Naive thymus-derived CD4-positive, alpha-beta T cell (primary cell): ENCODE measurements at regions of chr2 and their contacts with region 1.

Region 1: GRCh38 chr2:198127627-198128026 is 323.2 kb downstream of the PLCL1 start:
- DNase-seq: peak in 8 of 9 donors; percentile 24 to 66 (median 48)
- ATAC-seq: peak; percentile 81
- H3K4me3 ChIP-seq: no peak overlapping the region
- H3K4me3 Mint-ChIP-seq: no peak overlapping the region
- H3K27ac ChIP-seq: no peak overlapping the region
- H3K27ac Mint-ChIP-seq: peak overlapping the region in 1 of 9 donors; percentile 10
- H3K4me1 ChIP-seq: no peaks in the 10 kb centered on the region
- H3K4me1 Mint-ChIP-seq: peaks cover 0 to 21% (median 11%) of the 10 kb centered on the region in 7 donors
- H3K27me3 ChIP-seq: no peaks in the 10 kb centered on the region
- H3K27me3 Mint-ChIP-seq: peaks cover 0 to 3% (median 0%) of the 10 kb centered on the region in 5 donors

Region 2: GRCh38 chr2:197799068-197799467 is 328.6 kb before region 1 on chr2:
- CTCF ChIA-PET with region 1: interaction called, 12 read pairs
- POLR2A ChIA-PET with region 1: no interaction called
- intact Hi-C with region 1: loop called (anchors 1 kb)
- DNase-seq: no peak
- ATAC-seq: no peak
- H3K4me3 ChIP-seq: no peak overlapping the region
- H3K4me3 Mint-ChIP-seq: no peak overlapping the region
- H3K27ac ChIP-seq: no peak overlapping the region
- H3K27ac Mint-ChIP-seq: no peak overlapping the region
- H3K4me1 ChIP-seq: peaks cover 4 to 7% of the 10 kb centered on the region in 2 donors
- H3K4me1 Mint-ChIP-seq: peaks cover 6 to 12% (median 11%) of the 10 kb centered on the region in 7 donors
- H3K27me3 ChIP-seq: peaks cover 0 to 5% of the 10 kb centered on the region in 2 donors
- H3K27me3 Mint-ChIP-seq: peaks cover 0 to 45% (median 12%) of the 10 kb centered on the region in 5 donors

Region 3: GRCh38 chr2:197813093-197813787 is 314.4 kb before region 1 on chr2:
- CTCF ChIA-PET with region 1: interaction called, 18 read pairs
- POLR2A ChIA-PET with region 1: no interaction called
- intact Hi-C with region 1: no loop called
- DNase-seq: no peak
- ATAC-seq: peak; percentile 58
- H3K4me3 ChIP-seq: no peak overlapping the region
- H3K4me3 Mint-ChIP-seq: no peak overlapping the region
- H3K27ac ChIP-seq: no peak overlapping the region
- H3K27ac Mint-ChIP-seq: peak overlapping the region in 1 of 9 donors; percentile 51
- H3K4me1 ChIP-seq: peaks cover 0 to 40% of the 10 kb centered on the region in 2 donors
- H3K4me1 Mint-ChIP-seq: peaks cover 17 to 86% (median 76%) of the 10 kb centered on the region in 7 donors
- H3K27me3 ChIP-seq: no peaks in the 10 kb centered on the region
- H3K27me3 Mint-ChIP-seq: no peaks in the 10 kb centered on the region

Region 4: GRCh38 chr2:198117406-198118041 is 10.1 kb before region 1 on chr2:
- CTCF ChIA-PET with region 1: interaction called, 5 read pairs
- POLR2A ChIA-PET with region 1: no interaction called
- intact Hi-C with region 1: loop called in 1 of 2 experiments (anchors 1 kb)
- DNase-seq: no peak
- ATAC-seq: no peak
- H3K4me3 ChIP-seq: no peak overlapping the region
- H3K4me3 Mint-ChIP-seq: no peak overlapping the region
- H3K27ac ChIP-seq: no peak overlapping the region
- H3K27ac Mint-ChIP-seq: peak overlapping the region in 1 of 9 donors; percentile 32
- H3K4me1 ChIP-seq: no peaks in the 10 kb centered on the region
- H3K4me1 Mint-ChIP-seq: peaks cover 3 to 35% (median 14%) of the 10 kb centered on the region in 7 donors
- H3K27me3 ChIP-seq: no peaks in the 10 kb centered on the region
- H3K27me3 Mint-ChIP-seq: peaks cover 0 to 2% (median 0%) of the 10 kb centered on the region in 5 donors